PC-3 (cell line): ENCODE measurements at regions of chr9 and their contacts with region 1.

Region 1: DNA sequence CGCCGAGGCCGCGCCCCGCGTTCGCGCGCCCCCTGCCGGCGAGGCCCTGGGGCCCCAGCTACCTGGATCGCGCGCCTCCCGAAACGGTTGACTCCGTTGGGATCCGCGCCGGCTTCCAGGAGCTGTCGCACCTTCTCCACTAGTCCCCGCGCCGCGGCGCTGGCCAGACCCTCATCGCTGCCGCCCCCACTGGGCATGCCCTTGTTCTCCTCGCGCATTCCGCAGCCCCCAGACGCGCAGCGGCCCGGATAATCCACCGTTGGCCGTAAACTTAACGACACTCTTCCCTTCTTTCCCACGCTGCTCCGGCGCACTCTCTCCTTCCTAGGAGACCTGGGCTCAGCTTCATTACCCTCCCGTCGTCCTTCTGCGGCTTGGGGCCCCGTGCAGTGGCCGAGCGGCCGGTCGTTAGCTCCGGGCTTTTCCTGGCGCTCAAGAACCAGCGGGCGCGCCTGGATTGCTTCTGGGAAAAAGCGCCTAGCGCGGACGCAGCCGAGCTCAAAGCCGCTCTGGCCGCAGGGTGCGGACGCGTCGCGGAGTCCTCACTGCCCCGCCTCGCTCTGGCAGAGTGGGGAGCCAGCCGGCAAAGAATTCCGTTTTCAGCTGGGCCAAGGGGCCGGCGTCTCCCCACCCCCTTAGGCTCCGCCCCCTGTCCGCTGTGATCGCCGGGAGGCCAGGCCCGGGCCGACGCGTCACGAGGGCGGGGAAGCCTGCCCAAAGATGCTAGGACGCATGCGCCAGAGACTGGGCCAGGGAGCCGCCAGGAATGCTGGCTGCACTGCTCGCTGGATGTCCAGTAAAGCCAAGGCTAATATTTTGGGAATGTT is at the start of gene CDKN2B:
- DNase-seq: peak; percentile 95
- ATAC-seq: peak; percentile 89
- H3K4me3 ChIP-seq: peak within 1 kb of the TSS; percentile 87
- H3K27ac ChIP-seq: peak within 1 kb of the TSS; percentile 90
- H3K4me1 ChIP-seq: peaks cover 9% of the 10 kb centered on the region
- H3K27me3 ChIP-seq: no peaks in the 10 kb centered on the region
- CTCF ChIP-seq: peak; percentile 83
- total RNA-seq, gene CDKN2B: 32.2 and 32.7 TPM in 2 replicates

Region 2: GRCh38 chr9:21317956-21318923 is 690.7 kb before region 1 on chr9:
- CTCF ChIA-PET with region 1: interaction called, 10 read pairs
- POLR2A ChIA-PET with region 1: no interaction called
- intact Hi-C with region 1: no loop called
- DNase-seq: peak; percentile 64
- ATAC-seq: peak; percentile 76
- H3K4me3 ChIP-seq: no peak overlapping the region
- H3K27ac ChIP-seq: no peak overlapping the region
- H3K4me1 ChIP-seq: no peaks in the 10 kb centered on the region
- H3K27me3 ChIP-seq: no peaks in the 10 kb centered on the region
- CTCF ChIP-seq: peak; percentile 62

Region 3: GRCh38 chr9:21919377-21920362 is 89.3 kb before region 1 on chr9:
- CTCF ChIA-PET with region 1: no interaction called
- POLR2A ChIA-PET with region 1: no interaction called
- intact Hi-C with region 1: no loop called
- DNase-seq: peak; percentile 65
- ATAC-seq: peak; percentile 46
- H3K4me3 ChIP-seq: no peak overlapping the region
- H3K27ac ChIP-seq: 0 out of 2 replicates have a peak overlapping the region, but pooled peaks have one; percentile 8
- H3K4me1 ChIP-seq: peaks cover 10% of the 10 kb centered on the region
- H3K27me3 ChIP-seq: no peaks in the 10 kb centered on the region
- CTCF ChIP-seq: no peak

Region 4: GRCh38 chr9:22037954-22038690 is 29.2 kb after region 1 on chr9:
- CTCF ChIA-PET with region 1: interaction called, 7 read pairs
- POLR2A ChIA-PET with region 1: interaction called, 4 read pairs
- intact Hi-C with region 1: loop called (anchors 5 kb)
- DNase-seq: peak; percentile 48
- ATAC-seq: no peak; the same call in 1 of the 2 replicates
- H3K4me3 ChIP-seq: no peak overlapping the region
- H3K27ac ChIP-seq: no peak overlapping the region
- H3K4me1 ChIP-seq: peaks cover 62% of the 10 kb centered on the region
- H3K27me3 ChIP-seq: no peaks in the 10 kb centered on the region
- CTCF ChIP-seq: peak; percentile 44

Region 5: GRCh38 chr9:22119537-22120158 is 110.7 kb after region 1 on chr9:
- CTCF ChIA-PET with region 1: no interaction called
- POLR2A ChIA-PET with region 1: interaction called, 3 read pairs
- intact Hi-C with region 1: loop called (anchors 5 kb)
- DNase-seq: peak; percentile 61
- ATAC-seq: no peak
- H3K4me3 ChIP-seq: no peak overlapping the region
- H3K27ac ChIP-seq: peak overlapping the region; percentile 95; the same call in 1 of the 2 replicates
- H3K4me1 ChIP-seq: peaks cover 47% of the 10 kb centered on the region
- H3K27me3 ChIP-seq: no peaks in the 10 kb centered on the region
- CTCF ChIP-seq: peak; percentile 64